Activated CD4-positive, alpha-beta T cell treated with anti-CD3 and anti-CD28 coated beads, Interleukin-2, amount 10 ng/mL, durations not matched to agents 24 days and 14 days (primary cell): ENCODE measurements at regions of chr3 and their contacts with region 1.

Region 1: GRCh38 chr3:187974871-187975271 is 179.1 kb upstream of the LPP start:
- DNase-seq: peak; percentile 73
- H3K4me3 Mint-ChIP-seq: peak overlapping the region; percentile 73
- H3K27ac Mint-ChIP-seq: peak overlapping the region; percentile 94
- H3K4me1 Mint-ChIP-seq: peaks cover 63% of the 10 kb centered on the region
- H3K27me3 Mint-ChIP-seq: no peaks in the 10 kb centered on the region

Region 2: GRCh38 chr3:187745201-187746058 is 229.4 kb before region 1 on chr3 and contains the start of gene BCL6:
- intact Hi-C with region 1: loop called (anchors 1 kb)
- DNase-seq: peak; percentile 97
- H3K4me3 Mint-ChIP-seq: peak within 1 kb of the TSS; percentile 98
- H3K27ac Mint-ChIP-seq: peak within 1 kb of the TSS; percentile 99
- H3K4me1 Mint-ChIP-seq: peaks cover 61% of the 10 kb centered on the region
- H3K27me3 Mint-ChIP-seq: no peaks in the 10 kb centered on the region
- total RNA-seq, gene BCL6: 41.7 and 51.7 TPM in 2 replicates

Region 3: DNA sequence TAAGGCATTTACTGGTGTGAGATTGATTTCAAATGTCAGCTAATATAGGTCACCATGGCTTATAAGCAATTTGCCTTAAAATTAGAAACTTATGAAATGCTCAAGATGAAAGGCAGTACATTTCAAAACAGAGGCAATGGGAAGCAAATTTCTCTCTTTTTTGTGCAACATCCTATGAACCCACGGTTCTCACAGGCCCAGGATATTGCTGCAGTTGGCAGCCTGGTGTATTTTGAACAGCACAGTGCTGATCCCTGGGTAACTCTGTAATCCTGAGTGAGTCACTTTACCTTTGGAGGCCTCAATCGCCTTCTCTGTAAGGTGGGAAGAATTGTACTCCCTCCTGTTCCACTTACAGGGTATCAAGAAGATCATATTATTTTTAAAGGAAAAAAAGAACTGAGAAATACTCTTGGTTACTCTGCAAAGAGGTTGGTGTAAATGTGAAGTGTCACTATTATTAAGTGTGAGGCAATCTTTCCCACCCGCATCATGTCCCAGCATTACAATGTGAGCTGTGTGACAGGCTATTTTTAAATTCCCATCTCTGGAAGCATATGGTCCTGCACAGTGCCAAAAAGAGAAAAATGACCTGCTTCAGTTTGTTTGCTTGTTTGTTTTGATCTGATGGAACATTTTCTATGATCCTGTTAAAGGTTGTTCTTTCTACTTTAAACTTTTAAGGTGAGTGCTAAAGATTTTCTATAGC is 11.0 kb before region 1 on chr3:
- intact Hi-C with region 1: loop called (anchors 1 kb)
- DNase-seq: no peak
- H3K4me3 Mint-ChIP-seq: peak overlapping the region; percentile 31
- H3K27ac Mint-ChIP-seq: no peak overlapping the region
- H3K4me1 Mint-ChIP-seq: peaks cover 11% of the 10 kb centered on the region
- H3K27me3 Mint-ChIP-seq: peaks cover 6% of the 10 kb centered on the region

Region 4: GRCh38 chr3:188123170-188123905 is 148.5 kb after region 1 on chr3:
- intact Hi-C with region 1: loop called (anchors 5 kb)
- DNase-seq: no peak
- H3K4me3 Mint-ChIP-seq: no peak overlapping the region
- H3K27ac Mint-ChIP-seq: peak overlapping the region; percentile 45
- H3K4me1 Mint-ChIP-seq: peaks cover 17% of the 10 kb centered on the region
- H3K27me3 Mint-ChIP-seq: peaks cover 5% of the 10 kb centered on the region

Region 5: GRCh38 chr3:188257384-188258026 is 282.6 kb after region 1 on chr3:
- intact Hi-C with region 1: loop called (anchors 2 kb)
- DNase-seq: no peak
- H3K4me3 Mint-ChIP-seq: no peak overlapping the region
- H3K27ac Mint-ChIP-seq: peak overlapping the region; percentile 85
- H3K4me1 Mint-ChIP-seq: peaks cover 47% of the 10 kb centered on the region
- H3K27me3 Mint-ChIP-seq: no peaks in the 10 kb centered on the region

Region 6: DNA sequence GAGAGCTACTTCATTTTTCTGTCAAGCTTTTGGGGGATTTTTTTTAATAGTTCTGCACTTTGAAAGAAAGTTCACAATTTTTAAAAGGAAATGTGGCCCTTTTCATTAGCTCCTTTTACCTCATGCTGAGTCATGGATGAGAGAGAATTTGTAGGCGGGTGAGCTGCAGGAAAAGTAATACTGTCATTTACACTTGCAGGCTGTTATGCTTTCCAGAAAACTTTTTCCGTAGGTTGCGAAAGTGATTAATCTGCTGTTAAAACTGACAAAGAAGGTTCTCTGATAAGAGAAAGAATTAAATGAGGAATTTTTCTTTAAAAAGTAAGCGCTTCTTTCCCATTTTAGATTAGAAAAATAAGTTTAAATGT is 609.3 kb after region 1 on chr3:
- intact Hi-C with region 1: loop called (anchors 10 kb)
- DNase-seq: no peak
- H3K4me3 Mint-ChIP-seq: no peak overlapping the region
- H3K27ac Mint-ChIP-seq: no peak overlapping the region
- H3K4me1 Mint-ChIP-seq: peaks cover 14% of the 10 kb centered on the region
- H3K27me3 Mint-ChIP-seq: no peaks in the 10 kb centered on the region